ENCODE measurements at regions of chr12 and their contacts with region 1.

Region 1: DNA sequence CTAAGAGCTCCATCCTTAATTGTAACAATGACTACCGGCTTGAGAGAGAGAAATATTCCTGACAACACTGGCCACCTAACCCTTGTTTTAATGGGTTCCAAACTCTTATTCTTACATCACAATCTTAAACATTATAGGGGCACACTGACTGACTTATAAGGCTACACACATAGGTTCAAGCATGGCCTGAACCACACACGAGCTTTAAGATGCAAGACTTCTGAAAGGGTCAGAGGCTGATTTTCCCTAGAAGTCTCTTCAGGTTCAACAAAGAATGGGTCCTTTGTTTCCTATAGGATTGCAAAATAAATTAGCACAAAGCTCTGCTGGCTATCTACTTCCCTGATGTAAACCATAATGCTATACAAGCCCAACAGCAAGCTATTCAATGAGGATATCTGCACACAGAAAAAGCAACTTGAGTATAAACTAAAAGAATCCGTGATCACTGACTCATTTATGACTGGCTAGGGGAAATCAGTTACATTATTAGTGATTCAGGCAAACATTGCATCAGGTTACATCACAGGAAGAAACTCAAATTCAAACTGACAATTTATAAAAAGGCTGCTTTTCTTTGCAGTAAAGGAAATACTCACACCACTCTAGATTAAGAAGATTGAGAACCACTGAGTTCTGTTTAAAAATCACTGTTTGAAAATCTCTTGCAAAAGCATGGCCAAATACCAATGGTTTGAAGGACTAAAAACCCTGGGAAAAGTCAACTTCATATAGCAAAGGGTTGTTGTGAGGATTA is 8.5 kb downstream of the BTG1 start:
- DNase-seq: peak; percentile 72
- H3K4me3 Mint-ChIP-seq: peak overlapping the region; percentile 89
- H3K27ac Mint-ChIP-seq: peak overlapping the region; percentile 74
- H3K4me1 Mint-ChIP-seq: peaks cover 60% of the 10 kb centered on the region
- H3K27me3 Mint-ChIP-seq: no peaks in the 10 kb centered on the region
- CTCF ChIP-seq: no peak

Region 2: DNA sequence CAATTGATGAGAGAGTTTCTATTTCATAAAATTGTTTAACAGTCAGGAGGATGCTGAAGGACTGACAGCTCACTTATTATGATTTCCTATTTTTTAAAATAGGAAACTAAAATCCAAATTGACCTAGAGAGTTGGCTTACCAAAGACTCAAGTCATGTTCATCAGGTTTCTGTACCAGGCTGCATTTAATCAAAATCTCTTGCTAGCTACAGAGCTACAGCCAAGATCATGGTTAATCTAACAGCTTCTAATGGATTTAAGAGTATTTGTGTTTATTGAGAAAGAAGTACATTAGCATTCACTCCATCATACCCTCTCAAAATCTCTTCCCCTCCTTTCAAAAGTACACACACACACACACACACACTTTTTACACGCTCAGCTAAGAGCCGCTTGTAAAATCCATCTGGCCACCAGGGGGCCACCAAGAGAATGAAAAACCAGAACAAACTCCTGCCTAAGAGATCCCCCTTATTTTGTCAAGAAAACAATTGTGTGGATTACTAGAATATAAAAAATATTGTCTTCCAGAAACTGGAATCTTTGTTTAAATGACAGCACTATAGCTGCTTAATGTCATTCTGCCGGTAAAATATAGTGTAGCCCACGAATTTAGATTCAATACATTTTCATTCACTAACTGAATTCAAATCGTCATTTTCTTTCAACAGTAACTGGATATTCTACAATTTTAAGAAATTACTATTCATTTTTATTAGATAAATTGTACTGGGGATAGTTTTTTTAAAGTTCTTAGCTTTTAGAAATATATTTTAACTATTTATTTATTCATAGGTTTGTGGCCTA is 325.5 kb before region 1 on chr12:
- CTCF ChIA-PET with region 1: interaction called, 5 read pairs
- POLR2A ChIA-PET with region 1: interaction called, 222 read pairs
- intact Hi-C with region 1: no loop called
- DNase-seq: peak; percentile 61
- H3K4me3 Mint-ChIP-seq: no peak overlapping the region
- H3K27ac Mint-ChIP-seq: peak overlapping the region; percentile 43
- H3K4me1 Mint-ChIP-seq: peaks cover 11% of the 10 kb centered on the region
- H3K27me3 Mint-ChIP-seq: no peaks in the 10 kb centered on the region
- CTCF ChIP-seq: peak; percentile 57

Region 3: GRCh38 chr12:91926848-91927247 is 210.3 kb before region 1 on chr12:
- CTCF ChIA-PET with region 1: interaction called, 3 read pairs
- POLR2A ChIA-PET with region 1: interaction called, 25 read pairs
- intact Hi-C with region 1: loop called (anchors 1 kb)
- DNase-seq: peak; percentile 57
- H3K4me3 Mint-ChIP-seq: no peak overlapping the region
- H3K27ac Mint-ChIP-seq: peak overlapping the region; percentile 75
- H3K4me1 Mint-ChIP-seq: peaks cover 18% of the 10 kb centered on the region
- H3K27me3 Mint-ChIP-seq: no peaks in the 10 kb centered on the region
- CTCF ChIP-seq: no peak

Region 4: GRCh38 chr12:92034858-92035401 is 102.2 kb before region 1 on chr12:
- CTCF ChIA-PET with region 1: no interaction called
- POLR2A ChIA-PET with region 1: interaction called, 43 read pairs
- intact Hi-C with region 1: loop called (anchors 2 kb)
- DNase-seq: peak; percentile 95
- H3K4me3 Mint-ChIP-seq: peak overlapping the region; percentile 76
- H3K27ac Mint-ChIP-seq: peak overlapping the region; percentile 96
- H3K4me1 Mint-ChIP-seq: peaks cover 53% of the 10 kb centered on the region
- H3K27me3 Mint-ChIP-seq: no peaks in the 10 kb centered on the region
- CTCF ChIP-seq: no peak

Region 5: GRCh38 chr12:92244036-92244435 is 106.9 kb after region 1 on chr12:
- CTCF ChIA-PET with region 1: interaction called, 4 read pairs
- POLR2A ChIA-PET with region 1: interaction called, 146 read pairs
- intact Hi-C with region 1: no loop called
- DNase-seq: peak; percentile 25
- H3K4me3 Mint-ChIP-seq: peak overlapping the region; percentile 8
- H3K27ac Mint-ChIP-seq: peak overlapping the region; percentile 25
- H3K4me1 Mint-ChIP-seq: peaks cover 16% of the 10 kb centered on the region
- H3K27me3 Mint-ChIP-seq: no peaks in the 10 kb centered on the region
- CTCF ChIP-seq: no peak

Measured in MCF 10A (cell line).